AG04450 (cell line): ENCODE measurements at regions of chr5 and their contacts with region 1.

Region 1: GRCh38 chr5:83473346-83474163 is 2.0 kb downstream of the VCAN start:
- DNase-seq: peak; percentile 96
- H3K4me3 ChIP-seq: peak overlapping the region; percentile 92
- H3K27ac ChIP-seq: peak overlapping the region; percentile 95
- H3K27me3 ChIP-seq: no peaks in the 10 kb centered on the region
- CTCF ChIP-seq: peak; percentile 88

Region 2: DNA sequence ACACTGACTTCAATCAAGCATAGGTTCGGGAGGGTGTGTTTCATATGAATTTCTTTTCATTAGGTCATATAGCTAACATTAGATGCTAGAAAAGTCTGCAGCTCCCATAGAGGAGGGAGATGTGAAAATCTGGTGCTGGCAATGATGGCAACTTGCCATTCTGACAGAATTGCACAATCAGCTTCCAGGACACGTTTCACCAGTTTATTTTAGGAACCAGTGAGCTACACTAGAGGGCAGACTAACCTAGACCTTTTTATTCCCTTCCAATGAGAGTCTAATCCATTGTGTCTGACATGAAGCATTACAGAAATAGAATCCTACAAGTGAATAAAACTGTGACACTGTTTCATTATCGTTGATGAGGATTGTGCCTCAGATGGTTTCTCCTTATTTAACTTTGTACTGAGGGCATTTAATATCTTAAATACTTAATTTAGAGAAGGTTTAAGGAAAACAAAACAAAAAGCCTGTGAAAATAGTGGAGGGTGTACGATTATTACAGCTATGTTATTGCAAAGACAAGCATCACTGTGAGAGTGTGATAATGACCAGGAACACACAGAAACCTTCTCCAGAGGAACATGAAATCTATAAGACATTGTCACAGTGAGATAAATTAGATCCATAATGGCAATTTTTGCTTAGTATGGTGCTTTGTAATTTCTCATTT is 832.1 kb before region 1 on chr5:
- CTCF ChIA-PET with region 1: interaction called, 11 read pairs
- POLR2A ChIA-PET with region 1: no interaction called
- DNase-seq: peak; percentile 65
- H3K4me3 ChIP-seq: no peak overlapping the region
- H3K27ac ChIP-seq: no peak overlapping the region
- H3K27me3 ChIP-seq: no peaks in the 10 kb centered on the region
- CTCF ChIP-seq: peak; percentile 76

Region 3: DNA sequence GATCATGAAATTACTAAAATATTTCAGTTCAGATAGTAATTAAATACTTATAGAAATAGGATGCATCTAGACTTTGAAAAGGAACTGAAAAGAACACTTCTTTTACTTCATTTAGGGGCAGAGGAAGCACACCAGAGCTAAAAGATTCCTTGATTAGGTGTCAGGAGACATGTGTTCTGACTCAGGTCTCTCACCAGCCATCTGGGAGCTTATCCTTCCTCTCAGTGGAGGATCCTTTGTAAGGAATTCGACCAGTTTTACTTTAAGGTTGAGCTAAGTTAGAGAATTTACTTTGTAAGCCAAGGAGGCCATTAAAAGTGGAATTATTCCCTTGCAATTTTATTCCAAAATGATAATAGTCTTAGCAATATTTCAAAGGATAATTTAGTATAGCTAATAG is 14.7 kb after region 1 on chr5:
- CTCF ChIA-PET with region 1: interaction called, 3 read pairs
- POLR2A ChIA-PET with region 1: interaction called, 17 read pairs
- DNase-seq: no peak
- H3K4me3 ChIP-seq: no peak overlapping the region
- H3K27ac ChIP-seq: no peak overlapping the region
- H3K27me3 ChIP-seq: no peaks in the 10 kb centered on the region
- CTCF ChIP-seq: no peak

Region 4: GRCh38 chr5:83564069-83564749 is 90.7 kb after region 1 on chr5:
- CTCF ChIA-PET with region 1: interaction called, 11 read pairs
- POLR2A ChIA-PET with region 1: interaction called, 6 read pairs
- DNase-seq: no peak
- H3K4me3 ChIP-seq: no peak overlapping the region
- H3K27ac ChIP-seq: no peak overlapping the region
- H3K27me3 ChIP-seq: no peaks in the 10 kb centered on the region
- CTCF ChIP-seq: peak; percentile 58

Region 5: DNA sequence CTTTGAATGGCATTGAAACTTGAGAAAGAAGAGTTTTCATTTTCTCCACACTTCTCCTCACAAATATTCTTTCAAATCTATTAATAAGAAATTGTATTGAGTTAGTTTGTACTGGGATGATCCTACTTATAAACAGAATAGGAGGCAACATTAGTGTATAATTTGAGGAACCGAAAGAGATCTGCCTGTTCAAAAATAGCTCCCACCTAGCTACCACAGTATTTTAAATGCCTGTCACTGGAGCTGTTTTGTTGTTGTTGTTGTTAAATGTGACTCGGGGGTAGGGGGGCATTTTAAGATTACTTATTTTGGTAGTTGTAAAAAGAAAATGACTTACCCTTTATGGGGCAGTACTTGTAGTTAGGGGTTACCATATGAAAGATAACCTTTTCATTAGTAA is 267.2 kb after region 1 on chr5:
- CTCF ChIA-PET with region 1: no interaction called
- POLR2A ChIA-PET with region 1: no interaction called
- DNase-seq: no peak
- H3K4me3 ChIP-seq: no peak overlapping the region
- H3K27ac ChIP-seq: no peak overlapping the region
- H3K27me3 ChIP-seq: no peaks in the 10 kb centered on the region
- CTCF ChIP-seq: no peak